GM12878 (cell line): ENCODE measurements at regions of chr17 and their contacts with region 1.

Region 1: GRCh38 chr17:17356149-17356930 is 53.2 kb downstream of the NT5M start:
- DNase-seq: peak; percentile 2
- ATAC-seq: peak; percentile 92
- H3K4me3 ChIP-seq: no peak overlapping the region
- H3K27ac ChIP-seq: no peak overlapping the region
- H3K4me1 ChIP-seq: no peaks in the 10 kb centered on the region
- H3K27me3 ChIP-seq: no peaks in the 10 kb centered on the region
- CTCF ChIP-seq: peak; percentile 99 to 100 (median 100)
- EP300 ChIP-seq: no peak
- POLR2A ChIP-seq: no peak
- RAD21 ChIP-seq: peak; percentile 98

Region 2: GRCh38 chr17:17298108-17298507 is 58.2 kb before region 1 on chr17:
- CTCF ChIA-PET with region 1: no interaction called
- POLR2A ChIA-PET with region 1: no interaction called
- RAD21 ChIA-PET with region 1: no interaction called
- SMC1A ChIA-PET with region 1: no interaction called
- in situ Hi-C with region 1: no loop called
- intact Hi-C with region 1: no loop called
- DNase-seq: no peak
- ATAC-seq: peak; percentile 50
- H3K4me3 ChIP-seq: no peak overlapping the region
- H3K27ac ChIP-seq: no peak overlapping the region
- H3K4me1 ChIP-seq: peaks cover 22% of the 10 kb centered on the region
- H3K27me3 ChIP-seq: no peaks in the 10 kb centered on the region
- CTCF ChIP-seq: no peak
- EP300 ChIP-seq: no peak
- POLR2A ChIP-seq: no peak
- RAD21 ChIP-seq: no peak

Region 3: GRCh38 chr17:17376362-17376761 is 20.0 kb after region 1 on chr17:
- CTCF ChIA-PET with region 1: no interaction called
- POLR2A ChIA-PET with region 1: no interaction called
- RAD21 ChIA-PET with region 1: no interaction called
- SMC1A ChIA-PET with region 1: no interaction called
- in situ Hi-C with region 1: no loop called
- intact Hi-C with region 1: no loop called
- DNase-seq: no peak
- ATAC-seq: no peak
- H3K4me3 ChIP-seq: no peak overlapping the region
- H3K27ac ChIP-seq: no peak overlapping the region
- H3K4me1 ChIP-seq: no peaks in the 10 kb centered on the region
- H3K27me3 ChIP-seq: peaks cover 0 to 4% of the 10 kb centered on the region in 2 experiments; a peak in 2 of 4 replicates
- CTCF ChIP-seq: no peak
- EP300 ChIP-seq: no peak
- POLR2A ChIP-seq: no peak
- RAD21 ChIP-seq: no peak

Region 4: DNA sequence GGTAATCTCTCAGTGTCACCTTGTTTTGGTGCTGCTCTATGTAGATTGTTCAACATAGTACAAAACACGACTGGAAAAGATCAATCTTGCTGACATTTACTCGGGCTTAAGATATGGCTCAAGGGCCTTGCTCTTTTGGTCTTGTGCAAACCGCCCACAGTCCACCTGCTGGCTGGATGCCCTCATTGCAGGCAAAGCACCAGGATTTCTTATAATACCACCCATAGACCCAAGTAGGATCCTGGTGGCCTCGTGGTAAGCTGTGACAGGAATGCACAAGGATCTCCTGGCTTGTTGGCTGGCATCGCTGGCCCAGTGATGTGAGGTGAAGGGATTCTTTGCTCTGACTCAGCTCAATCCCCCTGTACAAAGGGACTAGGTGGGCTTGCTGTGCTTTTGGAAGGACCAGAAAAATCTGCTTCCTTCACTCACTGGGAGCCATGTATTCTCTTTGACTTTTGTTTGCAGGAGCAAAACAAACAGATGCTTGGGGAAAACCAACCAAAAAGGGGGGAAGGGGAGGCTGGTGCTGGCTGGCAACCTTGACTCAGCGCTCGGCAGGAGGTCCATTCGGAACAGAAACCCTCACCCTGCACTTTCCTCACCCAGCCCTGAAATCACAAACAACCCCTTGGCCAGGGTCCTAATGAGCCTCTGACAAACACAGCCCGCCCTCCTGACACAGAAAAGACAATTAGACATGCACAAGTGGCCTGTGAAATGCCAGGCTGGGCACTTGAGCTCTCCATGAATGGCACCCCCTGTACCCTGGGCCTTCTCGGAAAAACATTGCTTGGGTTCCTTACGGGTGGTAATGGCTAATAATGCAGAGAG is 83.9 kb after region 1 on chr17:
- CTCF ChIA-PET with region 1: interaction called, 3 read pairs
- POLR2A ChIA-PET with region 1: no interaction called
- RAD21 ChIA-PET with region 1: no interaction called
- SMC1A ChIA-PET with region 1: no interaction called
- in situ Hi-C with region 1: loop called (anchors 5 kb)
- intact Hi-C with region 1: loop called (anchors 1 kb)
- DNase-seq: peak; percentile 15
- ATAC-seq: peak; percentile 95
- H3K4me3 ChIP-seq: no peak overlapping the region
- H3K27ac ChIP-seq: no peak overlapping the region
- H3K4me1 ChIP-seq: no peaks in the 10 kb centered on the region
- H3K27me3 ChIP-seq: peaks cover 0 to 2% of the 10 kb centered on the region in 2 experiments; a peak in 1 of 4 replicates
- CTCF ChIP-seq: peak; percentile 70 to 90 (median 79)
- EP300 ChIP-seq: no peak
- POLR2A ChIP-seq: no peak
- RAD21 ChIP-seq: peak; percentile 60

Region 5: GRCh38 chr17:17568749-17569195 is 212.4 kb after region 1 on chr17:
- CTCF ChIA-PET with region 1: interaction called, 6 read pairs
- POLR2A ChIA-PET with region 1: no interaction called
- RAD21 ChIA-PET with region 1: no interaction called
- SMC1A ChIA-PET with region 1: no interaction called
- in situ Hi-C with region 1: no loop called
- intact Hi-C with region 1: loop called (anchors 1 kb)
- DNase-seq: no peak
- ATAC-seq: peak; percentile 77
- H3K4me3 ChIP-seq: no peak overlapping the region
- H3K27ac ChIP-seq: no peak overlapping the region
- H3K4me1 ChIP-seq: no peaks in the 10 kb centered on the region
- H3K27me3 ChIP-seq: no peaks in the 10 kb centered on the region
- CTCF ChIP-seq: peak; percentile 59 to 76 (median 63)
- EP300 ChIP-seq: no peak
- POLR2A ChIP-seq: no peak
- RAD21 ChIP-seq: peak; percentile 38